Activated naive CD4-positive, alpha-beta T cell treated with anti-CD3 and anti-CD28 coated beads, Interleukin-2, amount 10 ng/mL, durations not matched to agents 7 days and 5 days (primary cell): ENCODE measurements at regions of chr11 and their contacts with region 1.

Region 1: DNA sequence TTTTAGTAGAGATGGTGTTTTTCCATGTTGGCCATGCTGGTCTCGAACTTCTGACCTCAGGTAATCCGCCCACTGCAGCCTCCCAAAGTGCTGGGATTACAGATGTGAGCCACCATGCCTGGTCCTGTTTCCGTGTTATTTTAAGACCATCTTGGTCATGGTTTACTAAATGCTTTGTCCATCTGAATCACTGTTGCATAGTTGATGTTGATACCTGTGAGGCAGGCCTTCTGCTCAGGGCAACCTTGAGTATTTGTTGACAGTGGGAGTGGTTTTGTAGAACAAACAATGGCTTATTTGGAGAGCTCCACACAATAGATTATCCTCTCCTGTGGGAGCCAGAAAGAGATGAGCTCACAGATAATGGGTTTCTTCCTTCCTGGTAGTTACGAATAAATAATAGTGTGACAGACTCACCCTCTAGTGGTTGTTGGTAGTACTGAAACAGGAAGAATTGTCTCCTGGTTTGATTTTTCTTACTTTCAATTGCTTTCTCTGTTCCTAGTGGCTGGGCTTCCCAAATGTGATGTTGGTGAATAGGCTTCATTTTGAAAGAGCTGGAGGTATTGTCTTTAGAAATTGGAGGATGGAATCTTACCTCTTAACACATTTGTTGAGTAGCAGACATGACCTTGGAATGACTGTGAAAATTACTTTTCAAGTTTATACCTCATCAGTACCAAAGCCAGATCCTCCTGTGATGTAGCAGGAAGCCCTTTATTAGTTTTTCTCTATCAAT is 39.0 kb downstream of the CTNND1 start:
- DNase-seq: no peak
- H3K4me3 Mint-ChIP-seq: no peak overlapping the region
- H3K27ac Mint-ChIP-seq: peak overlapping the region; percentile 54
- H3K4me1 Mint-ChIP-seq: peaks cover 37% of the 10 kb centered on the region
- H3K27me3 Mint-ChIP-seq: no peaks in the 10 kb centered on the region

Region 2: GRCh38 chr11:57567515-57568329 is 232.9 kb before region 1 on chr11 and contains the start of gene UBE2L6:
- CTCF ChIA-PET with region 1: interaction called, 10 read pairs
- DNase-seq: peak; percentile 92
- H3K4me3 Mint-ChIP-seq: peak within 1 kb of the TSS; percentile 100
- H3K27ac Mint-ChIP-seq: peak within 1 kb of the TSS; percentile 99
- H3K4me1 Mint-ChIP-seq: peaks cover 54% of the 10 kb centered on the region
- H3K27me3 Mint-ChIP-seq: peaks cover 8% of the 10 kb centered on the region

Region 3: GRCh38 chr11:57712256-57713150 is 88.1 kb before region 1 on chr11 and contains the start of gene TMX2:
- CTCF ChIA-PET with region 1: interaction called, 19 read pairs
- DNase-seq: peak; percentile 95
- H3K4me3 Mint-ChIP-seq: peak within 1 kb of the TSS; percentile 95
- H3K27ac Mint-ChIP-seq: peak within 1 kb of the TSS; percentile 95
- H3K4me1 Mint-ChIP-seq: peaks cover 44% of the 10 kb centered on the region
- H3K27me3 Mint-ChIP-seq: no peaks in the 10 kb centered on the region

Region 4: DNA sequence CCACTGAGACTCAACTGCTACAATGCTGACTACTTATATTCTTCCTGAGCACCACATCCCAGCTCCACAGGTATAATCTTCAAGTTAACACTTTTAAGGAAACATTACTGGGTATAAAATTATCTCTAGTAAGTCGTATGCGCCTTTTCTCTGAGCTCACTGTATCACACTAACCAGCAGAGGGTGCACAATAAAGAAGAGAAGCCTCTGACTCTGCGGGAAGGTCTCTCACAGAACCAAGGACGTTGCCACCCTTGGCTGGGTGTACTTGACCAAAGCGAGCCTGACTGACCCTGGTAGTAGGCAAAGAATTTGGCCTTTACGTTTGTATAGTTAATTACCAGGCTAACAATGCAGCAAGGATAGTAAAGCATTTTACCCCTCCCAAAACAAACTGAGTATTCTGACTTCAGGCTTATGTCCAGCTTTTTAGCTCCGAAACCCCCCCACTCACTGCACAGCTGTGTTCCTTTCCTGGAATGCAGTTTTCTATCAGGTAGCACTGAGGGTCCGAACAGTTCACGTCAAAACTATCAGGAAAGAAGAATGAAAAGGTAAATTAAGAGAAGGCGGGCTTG is 48.8 kb before region 1 on chr11 and contains the start of gene BTBD18:
- CTCF ChIA-PET with region 1: interaction called, 43 read pairs
- DNase-seq: peak; percentile 28
- H3K4me3 Mint-ChIP-seq: no peak within 1 kb of the TSS
- H3K27ac Mint-ChIP-seq: peak within 1 kb of the TSS; percentile 52
- H3K4me1 Mint-ChIP-seq: peaks cover 11% of the 10 kb centered on the region
- H3K27me3 Mint-ChIP-seq: peaks cover 3% of the 10 kb centered on the region

Region 5: DNA sequence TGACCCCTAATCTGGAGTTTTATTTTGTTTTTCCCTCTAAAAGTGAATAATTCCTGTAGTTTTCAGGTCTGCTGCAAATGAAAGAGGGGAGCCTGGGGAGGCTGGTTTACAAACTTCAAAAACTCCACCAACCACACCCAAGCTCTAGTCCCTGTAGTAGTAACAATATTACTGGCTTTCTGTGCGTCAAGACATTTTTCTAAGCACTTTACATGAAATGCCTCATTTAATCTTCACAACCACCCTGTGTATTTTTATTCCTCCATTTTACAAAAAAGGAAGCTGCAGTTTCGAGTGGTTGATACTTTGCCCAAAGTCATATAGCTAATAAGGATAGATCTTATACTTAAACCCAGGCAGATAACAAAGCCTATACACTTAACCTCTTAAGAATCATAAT is 15.5 kb before region 1 on chr11:
- CTCF ChIA-PET with region 1: interaction called, 10 read pairs
- DNase-seq: no peak
- H3K4me3 Mint-ChIP-seq: no peak overlapping the region
- H3K27ac Mint-ChIP-seq: no peak overlapping the region
- H3K4me1 Mint-ChIP-seq: peaks cover 27% of the 10 kb centered on the region
- H3K27me3 Mint-ChIP-seq: peaks cover 3% of the 10 kb centered on the region